HepG2 (cell line): ENCODE measurements at regions of chr11 and their contacts with region 1.

Region 1: DNA sequence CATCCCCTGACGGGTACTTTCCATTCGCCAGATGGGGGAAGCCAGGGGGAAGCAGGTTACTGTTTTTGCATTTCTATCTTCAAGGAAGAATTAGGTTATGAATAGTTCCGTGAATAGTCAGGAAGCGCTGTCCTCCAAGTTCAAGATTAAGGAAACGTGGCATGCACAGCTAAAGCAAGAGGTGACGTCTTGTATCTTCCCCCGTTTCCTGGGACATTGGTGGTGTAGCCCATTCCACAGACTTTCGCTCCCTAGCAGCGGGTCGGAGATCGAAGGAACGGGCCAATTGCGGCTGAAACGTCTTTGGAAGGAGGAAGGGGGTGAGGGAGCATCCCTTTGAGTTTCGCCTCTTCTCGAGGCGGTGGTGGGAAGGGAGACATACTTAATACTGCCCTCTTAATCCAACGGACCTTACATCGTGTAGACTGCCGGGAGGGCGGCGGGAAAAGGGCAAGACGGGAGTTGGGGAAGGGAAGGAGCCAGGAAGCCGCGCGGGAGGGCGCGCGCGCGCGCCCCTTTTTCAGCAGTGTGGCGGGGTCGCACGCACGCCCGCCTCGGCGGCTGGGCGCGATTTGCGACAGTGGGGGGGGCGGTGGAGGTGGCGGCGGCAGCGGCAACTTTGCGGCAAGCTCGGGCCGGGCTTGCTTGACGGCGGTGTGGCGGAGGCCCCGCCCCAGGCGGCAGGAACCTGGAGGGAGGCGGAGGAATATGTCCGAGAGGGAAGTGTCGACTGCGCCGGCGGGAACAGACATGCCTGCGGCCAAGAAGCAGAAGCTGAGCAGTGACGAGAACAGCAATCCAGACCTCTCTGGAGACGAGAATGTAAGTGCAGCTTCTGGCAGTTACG is at the start of gene EED:
- DNase-seq: peak; percentile 88
- ATAC-seq: peak; percentile 95
- H3K4me3 ChIP-seq: peak within 1 kb of the TSS; percentile 72 to 96 (median 95)
- H3K27ac ChIP-seq: peak within 1 kb of the TSS; percentile 98
- H3K4me1 ChIP-seq: peaks cover 50% of the 10 kb centered on the region
- H3K27me3 ChIP-seq: no peaks in the 10 kb centered on the region; a peak in 2 of 5 replicates
- CTCF ChIP-seq: 0 out of 2 replicates have a peak, but pooled peaks have one; percentile 2
- EP300 ChIP-seq: no peak
- POLR2A ChIP-seq: peak; percentile 85 to 86
- RAD21 ChIP-seq: no peak
- total RNA-seq, gene EED: 28.4 and 39.7 TPM in 2 replicates

Region 2: GRCh38 chr11:86230921-86231430 is 13.8 kb before region 1 on chr11:
- CTCF ChIA-PET with region 1: no interaction called
- POLR2A ChIA-PET with region 1: no interaction called
- in situ Hi-C with region 1: no loop called
- intact Hi-C with region 1: loop called (anchors 2 kb)
- DNase-seq: no peak
- ATAC-seq: no peak
- H3K4me3 ChIP-seq: no peak overlapping the region
- H3K27ac ChIP-seq: no peak overlapping the region
- H3K4me1 ChIP-seq: peaks cover 10% of the 10 kb centered on the region
- H3K27me3 ChIP-seq: no peaks in the 10 kb centered on the region; a peak in 1 of 5 replicates
- CTCF ChIP-seq: no peak
- EP300 ChIP-seq: no peak
- POLR2A ChIP-seq: no peak
- RAD21 ChIP-seq: no peak

Region 3: GRCh38 chr11:86302100-86302793 is 57.5 kb after region 1 on chr11 and contains the start of gene HIKESHI:
- CTCF ChIA-PET with region 1: no interaction called
- POLR2A ChIA-PET with region 1: no interaction called
- in situ Hi-C with region 1: no loop called
- intact Hi-C with region 1: loop called (anchors 2 kb)
- DNase-seq: peak; percentile 98
- ATAC-seq: peak; percentile 100
- H3K4me3 ChIP-seq: peak within 1 kb of the TSS; percentile 81 to 92 (median 89)
- H3K27ac ChIP-seq: peak within 1 kb of the TSS; percentile 81
- H3K4me1 ChIP-seq: peaks cover 23% of the 10 kb centered on the region
- H3K27me3 ChIP-seq: no peaks in the 10 kb centered on the region; a peak in 1 of 5 replicates
- CTCF ChIP-seq: no peak
- EP300 ChIP-seq: peak in 1 of 2 experiments; percentile 62; a peak in 2 of 4 replicates
- POLR2A ChIP-seq: peak; percentile 84 to 92
- RAD21 ChIP-seq: no peak
- total RNA-seq, gene HIKESHI: 67.8 and 75.2 TPM in 2 replicates

Region 4: DNA sequence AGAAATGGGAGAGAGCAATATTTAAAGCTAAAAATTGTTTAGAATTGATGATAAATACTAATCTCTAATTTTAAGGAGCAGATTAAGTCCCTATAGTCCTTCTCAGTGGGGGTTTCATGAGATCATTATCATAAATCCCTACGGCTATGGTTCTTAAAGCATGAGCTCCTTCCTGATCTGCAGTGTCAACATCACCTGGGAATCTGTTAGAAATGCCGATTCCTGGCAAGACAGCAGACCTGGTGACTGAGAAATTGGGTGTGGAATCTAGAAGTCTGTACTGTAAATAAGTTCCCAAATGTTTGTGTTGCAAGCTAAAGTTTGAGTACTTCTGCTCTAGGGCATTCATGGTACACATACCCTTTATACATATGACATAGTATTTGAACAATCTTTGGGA is 69.9 kb after region 1 on chr11:
- CTCF ChIA-PET with region 1: no interaction called
- POLR2A ChIA-PET with region 1: no interaction called
- in situ Hi-C with region 1: no loop called
- intact Hi-C with region 1: no loop called
- DNase-seq: no peak
- ATAC-seq: no peak
- H3K4me3 ChIP-seq: no peak overlapping the region
- H3K27ac ChIP-seq: no peak overlapping the region
- H3K4me1 ChIP-seq: peaks cover 8% of the 10 kb centered on the region; the same call in 1 of the 2 replicates
- H3K27me3 ChIP-seq: no peaks in the 10 kb centered on the region
- CTCF ChIP-seq: no peak
- EP300 ChIP-seq: no peak
- POLR2A ChIP-seq: no peak
- RAD21 ChIP-seq: no peak

Region 5: GRCh38 chr11:86374586-86374985 is 129.8 kb after region 1 on chr11 and contains the start of gene CCDC81:
- CTCF ChIA-PET with region 1: no interaction called
- POLR2A ChIA-PET with region 1: no interaction called
- in situ Hi-C with region 1: no loop called
- intact Hi-C with region 1: no loop called
- DNase-seq: no peak
- ATAC-seq: no peak; the same call in 2 of the 3 replicates
- H3K4me3 ChIP-seq: no peak within 1 kb of the TSS
- H3K27ac ChIP-seq: no peak within 1 kb of the TSS
- H3K4me1 ChIP-seq: no peaks in the 10 kb centered on the region
- H3K27me3 ChIP-seq: 0 out of 5 replicates have a peak, but pooled peaks cover 0 to 3% of the 10 kb centered on the region in 2 experiments
- CTCF ChIP-seq: no peak
- EP300 ChIP-seq: no peak
- POLR2A ChIP-seq: no peak
- RAD21 ChIP-seq: no peak
- total RNA-seq, gene CCDC81: 0.15 and 0.18 TPM in 2 replicates